Activated CD4-positive, alpha-beta memory T cell treated with anti-CD3 and anti-CD28 coated beads for 36 hours (primary cell): ENCODE measurements at regions of chr4 and their contacts with region 1.

Region 1: GRCh38 chr4:125283707-125284279 is 31.0 kb upstream of the FAT4 start:
- DNase-seq: no peak
- H3K4me3 Mint-ChIP-seq: no peak overlapping the region
- H3K27ac Mint-ChIP-seq: no peak overlapping the region
- H3K4me1 Mint-ChIP-seq: no peaks in the 10 kb centered on the region
- H3K27me3 Mint-ChIP-seq: no peaks in the 10 kb centered on the region

Region 2: GRCh38 chr4:124334119-124334518 is 949.7 kb before region 1 on chr4:
- CTCF ChIA-PET with region 1: interaction called, 13 read pairs
- POLR2A ChIA-PET with region 1: no interaction called
- intact Hi-C with region 1: no loop called
- DNase-seq: no peak
- H3K4me3 Mint-ChIP-seq: no peak overlapping the region
- H3K27ac Mint-ChIP-seq: no peak overlapping the region
- H3K4me1 Mint-ChIP-seq: no peaks in the 10 kb centered on the region
- H3K27me3 Mint-ChIP-seq: no peaks in the 10 kb centered on the region

Region 3: GRCh38 chr4:125346616-125347015 is 62.8 kb after region 1 on chr4:
- CTCF ChIA-PET with region 1: no interaction called
- POLR2A ChIA-PET with region 1: no interaction called
- intact Hi-C with region 1: no loop called
- DNase-seq: no peak
- H3K4me3 Mint-ChIP-seq: no peak overlapping the region
- H3K27ac Mint-ChIP-seq: no peak overlapping the region
- H3K4me1 Mint-ChIP-seq: no peaks in the 10 kb centered on the region
- H3K27me3 Mint-ChIP-seq: no peaks in the 10 kb centered on the region

Region 4: DNA sequence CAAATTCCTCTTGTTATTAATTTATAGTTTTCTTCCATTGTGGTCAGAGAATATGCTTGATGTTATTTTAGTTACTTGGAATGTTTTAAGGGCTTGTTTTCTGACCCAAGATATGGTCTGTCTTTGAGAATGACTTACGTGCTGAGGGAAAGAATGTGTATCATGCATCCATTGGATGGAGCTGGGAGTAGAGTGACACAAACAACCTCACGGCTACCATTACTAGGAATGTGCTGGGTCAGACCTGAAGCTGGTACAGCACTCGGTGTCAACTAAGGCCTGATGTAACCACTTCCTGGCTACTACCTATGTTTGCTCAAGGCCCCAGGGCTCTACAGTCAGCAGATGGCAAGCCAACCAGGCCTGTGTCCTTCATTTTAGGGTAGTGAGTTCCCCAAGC is 288.8 kb after region 1 on chr4:
- CTCF ChIA-PET with region 1: no interaction called
- POLR2A ChIA-PET with region 1: no interaction called
- intact Hi-C with region 1: no loop called
- DNase-seq: no peak
- H3K4me3 Mint-ChIP-seq: no peak overlapping the region
- H3K27ac Mint-ChIP-seq: no peak overlapping the region
- H3K4me1 Mint-ChIP-seq: no peaks in the 10 kb centered on the region
- H3K27me3 Mint-ChIP-seq: no peaks in the 10 kb centered on the region